ENCODE measurements at regions of chr17 and their contacts with region 1.

Region 1: GRCh38 chr17:13129356-13129755 is 111.5 kb upstream of the ELAC2 start:
- H3K4me3 ChIP-seq: no peak overlapping the region
- H3K27ac ChIP-seq: no peak overlapping the region
- H3K4me1 ChIP-seq: no peaks in the 10 kb centered on the region
- CTCF ChIP-seq: no peak

Region 2: GRCh38 chr17:13102477-13102876 is 26.9 kb before region 1 on chr17:
- CTCF ChIA-PET with region 1: no interaction called
- POLR2A ChIA-PET with region 1: no interaction called
- H3K4me3 ChIP-seq: no peak overlapping the region
- H3K27ac ChIP-seq: no peak overlapping the region
- H3K4me1 ChIP-seq: no peaks in the 10 kb centered on the region
- CTCF ChIP-seq: no peak

Region 3: DNA sequence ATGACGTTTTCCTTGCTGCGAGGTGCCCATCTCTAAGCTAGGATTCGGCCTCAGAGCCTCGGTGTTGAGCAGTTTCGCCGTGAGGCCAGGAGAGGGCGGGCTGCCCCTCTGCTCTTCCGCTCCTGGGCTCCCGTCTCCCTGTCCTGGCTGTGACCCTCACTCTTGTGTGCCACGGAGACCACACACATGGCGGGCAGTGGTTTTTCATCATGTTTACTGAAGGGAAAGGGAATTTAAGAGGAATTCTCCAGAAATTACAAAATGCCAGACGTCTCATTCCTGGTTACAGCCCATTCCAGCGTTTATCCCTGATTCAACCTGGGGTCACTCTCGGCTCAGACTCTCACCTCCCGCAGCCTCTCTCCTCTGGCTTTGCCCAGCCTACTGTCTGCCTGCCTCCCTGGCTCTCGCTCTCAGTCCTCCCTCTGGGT is 14.7 kb before region 1 on chr17:
- CTCF ChIA-PET with region 1: interaction called, 14 read pairs
- POLR2A ChIA-PET with region 1: no interaction called
- H3K4me3 ChIP-seq: peak overlapping the region; percentile 19
- H3K27ac ChIP-seq: no peak overlapping the region
- H3K4me1 ChIP-seq: no peaks in the 10 kb centered on the region
- CTCF ChIP-seq: peak; percentile 72

Region 4: GRCh38 chr17:13171790-13172189 is 42.4 kb after region 1 on chr17:
- CTCF ChIA-PET with region 1: no interaction called
- POLR2A ChIA-PET with region 1: no interaction called
- H3K4me3 ChIP-seq: no peak overlapping the region
- H3K27ac ChIP-seq: no peak overlapping the region
- H3K4me1 ChIP-seq: 0 out of 2 replicates have a peak, but pooled peaks cover 2% of the 10 kb centered on the region
- CTCF ChIP-seq: no peak